ENCODE measurements at regions of chr17 and their contacts with region 1.

Region 1: DNA sequence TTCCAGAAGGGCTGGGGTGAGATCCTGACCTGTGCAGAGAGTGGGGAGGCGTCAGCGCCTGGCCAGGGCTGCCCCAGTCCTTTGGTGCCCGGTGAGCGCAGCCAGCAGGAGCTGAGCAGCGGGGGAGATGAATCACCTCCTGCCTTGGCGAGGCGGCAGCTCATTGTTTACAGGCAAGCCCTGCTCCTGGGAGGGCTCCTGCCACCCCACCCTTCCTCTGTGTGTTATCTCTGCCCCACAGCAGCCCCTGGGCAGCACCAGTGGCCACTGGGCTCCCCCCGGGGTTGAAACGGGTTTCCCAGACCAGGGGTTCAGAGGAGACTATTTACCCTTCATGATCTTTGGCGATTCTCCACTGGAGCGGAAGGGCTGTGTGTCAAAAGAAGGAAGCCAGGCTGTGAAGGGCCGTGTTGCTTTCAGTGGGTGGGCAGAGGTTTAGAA is 14.1 kb upstream of the ITGB4 start:
- DNase-seq: peak; percentile 86 to 90
- ATAC-seq: peak; percentile 92 to 93
- H3K4me3 ChIP-seq: no peak overlapping the region
- H3K27ac ChIP-seq: peak overlapping the region; percentile 93
- H3K4me1 ChIP-seq: peaks cover 57% of the 10 kb centered on the region
- CTCF ChIP-seq: no peak
- EP300 ChIP-seq: peak; percentile 62 to 87; a peak in 3 of 5 replicates
- POLR2A ChIP-seq: no peak
- RAD21 ChIP-seq: peak in 1 of 2 experiments; percentile 62; a peak in 4 of 5 replicates

Region 2: DNA sequence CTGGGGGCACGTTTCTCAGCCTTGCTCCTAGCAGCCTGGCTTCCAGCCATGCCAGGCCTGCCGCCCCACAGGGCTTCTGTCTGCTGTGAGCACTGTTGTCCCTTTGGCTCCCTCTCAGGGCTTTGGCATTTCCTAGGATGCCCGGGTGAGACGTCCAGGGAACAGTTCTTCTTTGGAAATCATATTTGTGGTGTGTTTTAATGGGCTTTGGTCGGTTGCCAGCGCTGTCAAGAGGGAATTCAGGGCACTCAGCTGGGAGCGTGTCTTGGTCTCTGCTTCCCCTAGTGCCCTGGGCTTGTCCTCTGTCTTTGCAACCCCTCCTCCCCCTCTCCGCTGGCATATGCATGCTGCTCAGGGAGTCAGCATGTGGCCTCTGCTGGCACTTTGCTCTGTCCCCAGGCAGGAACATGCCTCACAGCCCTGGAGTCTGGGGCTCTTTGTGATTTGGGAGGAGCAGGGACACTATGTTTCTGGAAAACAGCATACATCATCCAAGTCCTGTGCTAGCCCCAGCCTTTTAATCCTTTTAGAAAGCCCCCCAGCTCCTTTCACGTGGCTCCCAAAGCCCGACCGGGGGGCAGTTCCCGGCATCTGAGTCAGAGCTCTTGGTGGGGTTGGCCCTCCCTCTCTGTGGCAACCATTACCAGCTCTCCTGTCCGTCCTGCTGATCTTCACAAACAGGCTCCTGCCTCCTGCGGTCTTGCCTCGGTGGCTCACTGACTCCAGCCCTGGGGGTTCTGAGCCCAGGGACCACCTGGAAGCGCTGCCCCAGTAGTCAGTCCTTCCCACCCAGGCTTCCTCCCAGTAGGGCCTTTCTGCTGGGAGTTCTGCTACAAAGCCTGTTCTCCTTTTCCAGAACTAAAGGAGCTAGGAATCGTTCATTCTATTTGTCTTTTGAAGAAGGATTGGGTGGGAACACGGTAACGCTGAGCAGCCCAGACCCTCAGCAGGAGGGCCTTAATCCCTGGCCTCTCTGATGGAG is 13.4 kb before region 1 on chr17:
- CTCF ChIA-PET with region 1: no interaction called
- POLR2A ChIA-PET with region 1: interaction called, 10 read pairs
- DNase-seq: peak; percentile 65 to 85
- ATAC-seq: peak; percentile 70 to 75
- H3K4me3 ChIP-seq: no peak overlapping the region; the same call in 2 of the 3 replicates
- H3K27ac ChIP-seq: peak overlapping the region; percentile 93
- H3K4me1 ChIP-seq: peaks cover 100% of the 10 kb centered on the region
- CTCF ChIP-seq: no peak; the same call in 2 of the 3 replicates
- EP300 ChIP-seq: peak in 1 of 2 experiments; percentile 40; a peak in 2 of 5 replicates
- POLR2A ChIP-seq: no peak
- RAD21 ChIP-seq: peak; percentile 36 to 54; a peak in 3 of 5 replicates

Region 3: GRCh38 chr17:75720725-75721462 is 13.7 kb after region 1 on chr17 and contains the start of gene ITGB4:
- CTCF ChIA-PET with region 1: interaction called, 108 read pairs
- POLR2A ChIA-PET with region 1: interaction called, 7 read pairs
- DNase-seq: peak; percentile 42 to 75
- ATAC-seq: peak; percentile 68 to 70
- H3K4me3 ChIP-seq: peak within 1 kb of the TSS; percentile 57
- H3K27ac ChIP-seq: peak within 1 kb of the TSS; percentile 93 to 94
- H3K4me1 ChIP-seq: peaks cover 35% of the 10 kb centered on the region
- CTCF ChIP-seq: peak; percentile 29; the same call in 1 of the 3 replicates
- EP300 ChIP-seq: no peak
- POLR2A ChIP-seq: no peak
- RAD21 ChIP-seq: peak in 1 of 2 experiments; percentile 27; a peak in 2 of 5 replicates
- polyA plus RNA-seq, gene ITGB4: 19.8 and 20.6 TPM in 2 replicates

Measured in A549 (cell line).